Adrenal gland (tissue), 19 donors: ENCODE measurements at regions of chr3 and their contacts with region 1.

Region 1: GRCh38 chr3:166013073-166013679 is 176.0 kb upstream of the BCHE start:
- DNase-seq: peak in 1 of 7 donors; percentile 13
- H3K4me3 ChIP-seq: no peak overlapping the region
- H3K27ac ChIP-seq: no peak overlapping the region
- H3K4me1 ChIP-seq: no peaks in the 10 kb centered on the region
- H3K27me3 ChIP-seq: no peaks in the 10 kb centered on the region
- CTCF ChIP-seq: peak; percentile 16 to 49 (median 33)
- POLR2A ChIP-seq: no peak

Region 2: GRCh38 chr3:165874663-165875489 is 138.3 kb before region 1 on chr3:
- intact Hi-C with region 1: no loop called
- DNase-seq: no peak
- H3K4me3 ChIP-seq: no peak overlapping the region
- H3K27ac ChIP-seq: no peak overlapping the region
- H3K4me1 ChIP-seq: no peaks in the 10 kb centered on the region
- H3K27me3 ChIP-seq: no peaks in the 10 kb centered on the region
- CTCF ChIP-seq: no peak
- POLR2A ChIP-seq: no peak

Region 3: DNA sequence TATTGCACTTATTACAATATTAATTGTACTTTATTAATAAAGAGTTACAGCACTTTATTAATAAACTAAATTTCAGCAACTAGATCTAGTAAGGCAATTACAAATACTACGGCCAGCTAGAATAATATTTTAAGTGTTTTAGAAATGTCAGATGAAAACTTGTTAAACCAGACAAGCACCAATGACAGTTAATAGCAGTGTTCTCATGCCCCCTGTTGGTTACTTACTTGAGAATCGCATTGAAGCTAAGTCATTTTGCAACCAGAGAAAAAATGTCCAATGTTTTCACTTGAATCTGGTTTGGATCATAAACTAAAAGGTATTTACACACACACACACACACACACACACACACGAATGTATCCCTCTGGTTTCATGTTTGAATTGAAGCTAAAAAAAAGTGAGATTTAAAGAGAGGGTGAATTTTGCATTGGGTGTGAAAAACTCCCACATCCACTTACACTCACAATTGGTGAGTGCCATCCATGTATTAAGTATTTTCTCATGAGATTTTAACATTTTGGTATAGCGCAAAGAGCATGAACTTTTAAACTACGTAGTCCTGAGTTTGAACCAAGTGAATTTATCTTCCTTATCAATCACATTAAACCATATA is 1019.2 kb after region 1 on chr3:
- intact Hi-C with region 1: loop called in 1 of 2 experiments (anchors 10 kb)
- DNase-seq: peak in 3 of 7 donors; percentile 8 to 34 (median 24)
- H3K4me3 ChIP-seq: no peak overlapping the region
- H3K27ac ChIP-seq: no peak overlapping the region
- H3K4me1 ChIP-seq: no peaks in the 10 kb centered on the region
- H3K27me3 ChIP-seq: no peaks in the 10 kb centered on the region
- CTCF ChIP-seq: peak in 5 of 6 experiments; percentile 33 to 57 (median 50)
- POLR2A ChIP-seq: no peak